Mammary epithelial cell (primary cell): ENCODE measurements at regions of chr9 and their contacts with region 1.

Region 1: DNA sequence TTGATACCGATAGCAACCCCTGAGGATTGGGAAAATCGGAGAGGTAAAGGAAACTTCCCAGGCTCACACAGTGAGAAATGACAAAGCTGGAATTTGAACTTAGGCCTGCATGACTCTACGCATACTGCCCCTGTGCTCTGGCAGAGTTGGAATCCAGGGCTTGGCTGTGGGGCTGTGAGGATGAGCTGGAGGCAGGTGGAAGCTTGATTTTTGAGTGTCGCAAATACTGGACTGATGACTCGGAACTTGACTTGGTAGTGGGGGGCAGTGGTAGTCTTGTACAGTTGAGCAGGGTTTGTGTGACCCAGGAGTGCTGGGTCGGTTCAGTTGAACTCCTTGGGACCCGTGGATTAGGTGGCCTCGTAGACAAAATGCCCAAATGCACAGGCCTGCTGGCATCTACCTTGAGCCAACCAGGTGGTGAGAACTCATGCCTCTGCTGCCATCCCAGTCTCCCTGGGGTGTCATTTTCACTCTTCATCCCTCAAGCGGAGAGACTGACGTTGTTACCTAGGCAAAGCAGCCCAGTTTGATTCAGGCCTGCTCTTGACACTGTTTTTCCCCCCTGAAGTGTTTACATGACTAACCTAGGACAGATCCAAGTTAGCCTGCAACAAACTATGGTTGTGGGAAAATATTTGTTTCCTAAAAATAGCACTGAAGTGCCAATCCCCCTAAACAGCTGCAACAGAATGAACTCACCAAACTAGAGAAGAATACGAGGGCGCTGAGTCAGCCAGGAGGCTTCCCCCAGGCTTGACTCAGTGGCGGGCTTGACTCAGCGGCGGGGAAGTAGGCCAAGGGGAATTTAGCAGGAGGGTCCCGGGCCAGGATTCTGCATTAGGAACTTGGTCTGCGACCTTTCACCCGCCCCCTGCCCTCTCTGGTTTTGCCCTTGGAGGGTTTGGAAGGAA is 45.7 kb upstream of the ORM1 start:
- DNase-seq: peak; percentile 69
- H3K4me3 ChIP-seq: no peak overlapping the region
- H3K27ac ChIP-seq: peak overlapping the region; percentile 77
- H3K4me1 ChIP-seq: peaks cover 56% of the 10 kb centered on the region
- H3K27me3 ChIP-seq: no peaks in the 10 kb centered on the region
- CTCF ChIP-seq: no peak

Region 2: GRCh38 chr9:114214173-114214572 is 63.0 kb before region 1 on chr9:
- CTCF ChIA-PET with region 1: no interaction called
- dilution Hi-C with region 1: loop called (anchors 5 kb)
- in situ Hi-C with region 1: no loop called
- intact Hi-C with region 1: no loop called
- DNase-seq: no peak
- H3K4me3 ChIP-seq: no peak overlapping the region
- H3K27ac ChIP-seq: no peak overlapping the region
- H3K4me1 ChIP-seq: peaks cover 9% of the 10 kb centered on the region
- H3K27me3 ChIP-seq: no peaks in the 10 kb centered on the region
- CTCF ChIP-seq: no peak

Region 3: DNA sequence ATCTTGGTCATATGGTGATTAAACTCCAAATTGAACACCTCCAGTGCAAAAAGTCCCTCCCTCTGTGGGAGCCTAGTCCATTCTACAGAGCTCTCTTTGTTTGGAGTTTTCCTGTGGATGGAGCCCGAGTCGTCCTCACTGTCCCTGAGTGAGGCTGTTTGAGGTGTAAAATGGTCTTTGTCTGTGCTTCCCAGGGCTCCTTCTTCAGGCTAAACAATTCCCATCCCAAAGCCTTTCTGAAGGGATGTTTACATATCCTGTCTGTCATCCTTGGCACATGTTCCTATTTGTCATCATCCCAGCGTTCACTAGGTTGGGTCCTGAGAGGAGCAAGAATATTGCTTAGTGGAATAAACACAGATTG is 52.9 kb before region 1 on chr9:
- CTCF ChIA-PET with region 1: no interaction called
- dilution Hi-C with region 1: no loop called
- in situ Hi-C with region 1: no loop called
- intact Hi-C with region 1: loop called (anchors 5 kb)
- DNase-seq: peak; percentile 57
- H3K4me3 ChIP-seq: no peak overlapping the region
- H3K27ac ChIP-seq: no peak overlapping the region
- H3K4me1 ChIP-seq: peaks cover 37% of the 10 kb centered on the region
- H3K27me3 ChIP-seq: no peaks in the 10 kb centered on the region
- CTCF ChIP-seq: no peak

Region 4: GRCh38 chr9:114250235-114250568 is 27.0 kb before region 1 on chr9:
- CTCF ChIA-PET with region 1: no interaction called
- dilution Hi-C with region 1: no loop called
- in situ Hi-C with region 1: no loop called
- intact Hi-C with region 1: loop called (anchors 2 kb)
- DNase-seq: no peak
- H3K4me3 ChIP-seq: no peak overlapping the region
- H3K27ac ChIP-seq: no peak overlapping the region
- H3K4me1 ChIP-seq: no peaks in the 10 kb centered on the region
- H3K27me3 ChIP-seq: no peaks in the 10 kb centered on the region
- CTCF ChIP-seq: no peak

Region 5: GRCh38 chr9:114317665-114318357 is 40.6 kb after region 1 on chr9:
- CTCF ChIA-PET with region 1: no interaction called
- dilution Hi-C with region 1: no loop called
- in situ Hi-C with region 1: no loop called
- intact Hi-C with region 1: no loop called
- DNase-seq: no peak
- H3K4me3 ChIP-seq: no peak overlapping the region
- H3K27ac ChIP-seq: no peak overlapping the region
- H3K4me1 ChIP-seq: no peaks in the 10 kb centered on the region
- H3K27me3 ChIP-seq: no peaks in the 10 kb centered on the region
- CTCF ChIP-seq: no peak

Region 6: DNA sequence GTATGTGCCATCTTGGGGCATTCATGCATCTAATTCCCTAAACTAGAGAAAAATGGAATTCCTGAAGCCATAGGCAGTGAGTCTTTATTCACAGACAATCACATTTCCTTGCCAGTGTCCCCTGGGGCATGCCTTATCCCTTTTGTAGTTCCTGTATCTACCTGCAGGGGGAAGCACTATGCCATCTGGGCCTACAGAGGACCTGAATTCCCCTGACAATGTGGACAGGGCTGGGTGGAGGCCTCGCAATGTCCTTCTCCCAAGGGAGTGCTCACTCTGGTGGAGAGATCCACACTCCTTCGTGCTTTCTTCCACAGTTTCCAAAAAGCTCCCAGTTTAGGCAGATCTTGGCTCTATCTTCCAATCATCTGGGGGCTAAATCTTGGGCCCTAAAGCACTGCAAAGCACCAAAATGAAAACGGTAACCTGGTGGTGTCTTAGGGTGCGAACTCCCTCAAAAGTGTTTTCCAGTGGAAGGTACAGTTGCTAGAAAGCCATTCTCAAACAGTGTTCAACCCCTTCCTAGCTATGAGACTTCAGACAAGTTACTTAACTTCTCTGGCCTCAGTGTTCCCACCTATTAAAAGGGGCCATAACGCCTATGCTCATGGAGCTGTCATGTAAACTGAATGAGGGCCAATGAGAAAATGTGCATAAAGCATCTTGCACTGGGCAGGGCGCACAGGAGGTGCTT is 210.6 kb after region 1 on chr9:
- CTCF ChIA-PET with region 1: no interaction called
- dilution Hi-C with region 1: no loop called
- in situ Hi-C with region 1: no loop called
- intact Hi-C with region 1: no loop called
- DNase-seq: peak; percentile 66
- H3K4me3 ChIP-seq: no peak overlapping the region
- H3K27ac ChIP-seq: no peak overlapping the region
- H3K4me1 ChIP-seq: peaks cover 17% of the 10 kb centered on the region
- H3K27me3 ChIP-seq: no peaks in the 10 kb centered on the region
- CTCF ChIP-seq: peak; percentile 89 to 96